ENCODE measurements at regions of chr1 and their contacts with region 1.

Region 1: DNA sequence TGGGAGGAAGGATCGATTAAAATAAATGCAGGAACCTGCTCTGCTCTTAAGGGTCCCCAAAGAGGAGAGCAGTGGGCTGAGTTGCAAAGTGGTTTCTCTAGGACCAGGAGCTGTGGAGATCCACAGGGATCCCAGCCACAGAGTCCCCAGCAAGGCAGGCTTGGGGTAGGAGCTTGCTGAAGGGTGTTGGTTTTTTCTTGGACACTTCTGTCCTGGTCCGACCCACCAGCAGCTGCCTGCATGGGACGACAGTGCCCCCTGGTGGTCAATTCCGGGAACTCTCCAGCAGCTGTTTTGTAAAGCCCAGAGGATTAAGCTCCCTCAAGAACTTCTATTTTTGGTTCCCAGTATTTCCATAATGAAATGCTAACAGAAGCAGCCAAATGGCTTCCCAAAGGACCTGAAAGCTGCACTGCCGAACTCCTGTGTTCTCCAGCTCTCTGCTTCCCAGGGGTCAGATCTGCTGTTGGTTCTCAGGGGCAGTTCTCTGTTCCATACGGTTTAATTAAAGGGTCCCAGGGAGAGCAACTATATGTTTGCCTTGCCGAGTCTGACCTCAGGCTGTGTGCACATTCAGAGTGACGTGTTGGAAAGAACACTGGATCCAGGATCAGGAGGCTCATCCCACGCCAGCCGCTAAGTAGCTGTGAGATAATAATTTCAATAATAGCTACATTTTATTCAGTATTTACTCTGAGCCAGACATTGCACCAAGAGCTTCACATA is 23.2 kb downstream of the NENF start:
- DNase-seq: peak; percentile 64 to 90 (median 80)
- ATAC-seq: peak; percentile 74
- H3K4me3 ChIP-seq: no peak overlapping the region
- H3K4me3 Mint-ChIP-seq: no peak overlapping the region
- H3K27ac ChIP-seq: no peak overlapping the region
- H3K27ac Mint-ChIP-seq: no peak overlapping the region
- H3K4me1 ChIP-seq: peaks cover 5% of the 10 kb centered on the region
- H3K4me1 Mint-ChIP-seq: peaks cover 7% of the 10 kb centered on the region
- H3K27me3 ChIP-seq: no peaks in the 10 kb centered on the region
- H3K27me3 Mint-ChIP-seq: no peaks in the 10 kb centered on the region
- CTCF ChIP-seq: peak; percentile 99

Region 2: GRCh38 chr1:211680752-211681327 is 775.1 kb before region 1 on chr1:
- CTCF ChIA-PET with region 1: interaction called, 16 read pairs
- POLR2A ChIA-PET with region 1: interaction called, 6 read pairs
- intact Hi-C with region 1: loop called (anchors 1 to 2 kb)
- DNase-seq: peak; percentile 54 to 93 (median 68)
- ATAC-seq: peak; percentile 90
- H3K4me3 ChIP-seq: no peak overlapping the region
- H3K4me3 Mint-ChIP-seq: no peak overlapping the region
- H3K27ac ChIP-seq: peak overlapping the region; percentile 51 to 66
- H3K27ac Mint-ChIP-seq: peak overlapping the region; percentile 81
- H3K4me1 ChIP-seq: peaks cover 9% of the 10 kb centered on the region
- H3K4me1 Mint-ChIP-seq: peaks cover 11% of the 10 kb centered on the region
- H3K27me3 ChIP-seq: no peaks in the 10 kb centered on the region
- H3K27me3 Mint-ChIP-seq: no peaks in the 10 kb centered on the region
- CTCF ChIP-seq: peak; percentile 84

Region 3: GRCh38 chr1:212012034-212012740 is 443.8 kb before region 1 on chr1:
- CTCF ChIA-PET with region 1: interaction called, 7 read pairs
- POLR2A ChIA-PET with region 1: no interaction called
- intact Hi-C with region 1: loop called (anchors 1 to 2 kb)
- DNase-seq: peak; percentile 39 to 80 (median 51)
- ATAC-seq: peak; percentile 100
- H3K4me3 ChIP-seq: no peak overlapping the region
- H3K4me3 Mint-ChIP-seq: no peak overlapping the region
- H3K27ac ChIP-seq: no peak overlapping the region
- H3K27ac Mint-ChIP-seq: no peak overlapping the region
- H3K4me1 ChIP-seq: no peaks in the 10 kb centered on the region
- H3K4me1 Mint-ChIP-seq: no peaks in the 10 kb centered on the region
- H3K27me3 ChIP-seq: no peaks in the 10 kb centered on the region
- H3K27me3 Mint-ChIP-seq: no peaks in the 10 kb centered on the region
- CTCF ChIP-seq: peak; percentile 89

Region 4: GRCh38 chr1:212070720-212071302 is 385.2 kb before region 1 on chr1:
- CTCF ChIA-PET with region 1: interaction called, 43 read pairs
- POLR2A ChIA-PET with region 1: interaction called, 11 read pairs
- intact Hi-C with region 1: loop called (anchors 1 kb)
- DNase-seq: peak in 3 of 14 experiments; percentile 68 to 71 (median 70)
- ATAC-seq: peak; percentile 62
- H3K4me3 ChIP-seq: no peak overlapping the region
- H3K4me3 Mint-ChIP-seq: no peak overlapping the region
- H3K27ac ChIP-seq: no peak overlapping the region
- H3K27ac Mint-ChIP-seq: no peak overlapping the region
- H3K4me1 ChIP-seq: no peaks in the 10 kb centered on the region
- H3K4me1 Mint-ChIP-seq: no peaks in the 10 kb centered on the region
- H3K27me3 ChIP-seq: no peaks in the 10 kb centered on the region
- H3K27me3 Mint-ChIP-seq: no peaks in the 10 kb centered on the region
- CTCF ChIP-seq: peak; percentile 76

Region 5: GRCh38 chr1:212368073-212368484 is 87.9 kb before region 1 on chr1:
- CTCF ChIA-PET with region 1: interaction called, 3 read pairs
- POLR2A ChIA-PET with region 1: no interaction called
- intact Hi-C with region 1: loop called (anchors 5 kb)
- DNase-seq: peak in 13 of 14 experiments; percentile 17 to 81 (median 25)
- ATAC-seq: peak; percentile 95
- H3K4me3 ChIP-seq: no peak overlapping the region
- H3K4me3 Mint-ChIP-seq: no peak overlapping the region
- H3K27ac ChIP-seq: no peak overlapping the region
- H3K27ac Mint-ChIP-seq: no peak overlapping the region
- H3K4me1 ChIP-seq: no peaks in the 10 kb centered on the region
- H3K4me1 Mint-ChIP-seq: peaks cover 5% of the 10 kb centered on the region
- H3K27me3 ChIP-seq: no peaks in the 10 kb centered on the region
- H3K27me3 Mint-ChIP-seq: no peaks in the 10 kb centered on the region
- CTCF ChIP-seq: peak; percentile 69

Region 6: GRCh38 chr1:212769459-212770167 is 313.6 kb after region 1 on chr1:
- CTCF ChIA-PET with region 1: no interaction called
- POLR2A ChIA-PET with region 1: no interaction called
- intact Hi-C with region 1: no loop called
- DNase-seq: no peak
- ATAC-seq: peak; percentile 48
- H3K4me3 ChIP-seq: no peak overlapping the region
- H3K4me3 Mint-ChIP-seq: no peak overlapping the region
- H3K27ac ChIP-seq: peak overlapping the region in 1 of 2 donors; percentile 13
- H3K27ac Mint-ChIP-seq: peak overlapping the region; percentile 26
- H3K4me1 ChIP-seq: no peaks in the 10 kb centered on the region
- H3K4me1 Mint-ChIP-seq: peaks cover 54% of the 10 kb centered on the region
- H3K27me3 ChIP-seq: no peaks in the 10 kb centered on the region
- H3K27me3 Mint-ChIP-seq: no peaks in the 10 kb centered on the region
- CTCF ChIP-seq: no peak

Region 7: GRCh38 chr1:212994926-212995325 is 539.0 kb after region 1 on chr1:
- CTCF ChIA-PET with region 1: no interaction called
- POLR2A ChIA-PET with region 1: no interaction called
- intact Hi-C with region 1: loop called in 1 of 2 experiments (anchors 5 kb)
- DNase-seq: no peak
- ATAC-seq: no peak
- H3K4me3 ChIP-seq: no peak overlapping the region
- H3K4me3 Mint-ChIP-seq: no peak overlapping the region
- H3K27ac ChIP-seq: no peak overlapping the region
- H3K27ac Mint-ChIP-seq: no peak overlapping the region
- H3K4me1 ChIP-seq: no peaks in the 10 kb centered on the region
- H3K4me1 Mint-ChIP-seq: peaks cover 8% of the 10 kb centered on the region
- H3K27me3 ChIP-seq: no peaks in the 10 kb centered on the region
- H3K27me3 Mint-ChIP-seq: no peaks in the 10 kb centered on the region
- CTCF ChIP-seq: no peak

Measured in CD4-positive, alpha-beta T cell (primary cell).